PC-3 (cell line): ENCODE measurements at regions of chr10 and their contacts with region 1.

Region 1: DNA sequence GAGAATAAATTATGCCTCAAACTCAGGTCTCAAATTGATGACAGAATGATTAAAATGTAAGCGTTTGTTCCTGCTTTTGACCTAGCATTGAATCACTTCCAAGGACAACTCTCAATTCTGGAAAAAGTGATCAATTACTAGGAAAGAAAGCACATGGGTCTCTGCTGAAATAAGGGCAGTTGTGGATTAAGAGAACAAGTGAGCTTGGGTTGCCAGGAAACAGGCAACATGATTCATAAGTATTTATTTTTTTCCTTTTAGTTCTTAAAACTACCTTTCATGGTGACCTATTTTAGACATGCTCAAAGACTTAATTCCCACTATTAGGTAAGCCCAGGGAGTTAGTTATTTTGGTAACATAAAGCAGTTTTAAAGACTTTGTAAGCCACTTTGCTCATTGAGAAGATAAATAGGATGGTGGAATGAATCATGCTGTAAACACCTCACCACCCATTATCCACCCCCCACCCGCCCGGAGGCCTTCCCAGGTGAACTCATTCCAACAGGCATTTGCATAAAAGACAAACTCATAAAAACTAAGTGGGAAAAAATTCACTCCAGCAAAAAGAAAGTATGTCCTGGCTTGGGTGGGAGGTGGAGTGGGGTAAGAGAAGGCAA is 728.3 kb downstream of the SORCS1 start:
- DNase-seq: peak; percentile 92
- ATAC-seq: peak; percentile 66
- H3K4me3 ChIP-seq: no peak overlapping the region
- H3K27ac ChIP-seq: peak overlapping the region; percentile 100
- H3K4me1 ChIP-seq: peaks cover 55% of the 10 kb centered on the region
- H3K27me3 ChIP-seq: no peaks in the 10 kb centered on the region
- CTCF ChIP-seq: no peak

Region 2: DNA sequence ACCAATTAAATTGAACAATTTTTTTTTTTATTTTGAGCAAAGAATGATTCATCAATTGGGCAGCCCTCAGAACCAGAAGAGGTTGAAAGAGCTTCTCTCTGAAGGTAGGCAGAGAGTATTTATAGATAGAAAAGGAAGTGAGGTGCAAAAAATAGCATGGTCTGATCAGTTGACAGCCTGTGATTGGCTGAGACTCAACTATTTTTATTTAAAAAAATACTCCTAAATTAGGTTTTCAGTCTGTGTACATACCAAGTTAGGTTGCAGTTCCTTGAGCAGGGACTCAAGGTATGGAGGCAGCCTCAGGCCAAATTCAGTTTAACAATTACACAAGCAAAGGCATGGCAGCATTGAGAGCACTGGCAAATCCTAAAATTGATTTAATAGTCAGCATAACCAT is 346.4 kb before region 1 on chr10:
- CTCF ChIA-PET with region 1: no interaction called
- POLR2A ChIA-PET with region 1: no interaction called
- intact Hi-C with region 1: no loop called
- DNase-seq: no peak
- ATAC-seq: no peak
- H3K4me3 ChIP-seq: no peak overlapping the region
- H3K27ac ChIP-seq: no peak overlapping the region
- H3K4me1 ChIP-seq: no peaks in the 10 kb centered on the region
- H3K27me3 ChIP-seq: no peaks in the 10 kb centered on the region
- CTCF ChIP-seq: no peak

Region 3: GRCh38 chr10:106424981-106425380 is 11.3 kb before region 1 on chr10:
- CTCF ChIA-PET with region 1: no interaction called
- POLR2A ChIA-PET with region 1: no interaction called
- intact Hi-C with region 1: loop called (anchors 1 kb)
- DNase-seq: peak; percentile 86
- ATAC-seq: peak; percentile 40
- H3K4me3 ChIP-seq: no peak overlapping the region
- H3K27ac ChIP-seq: peak overlapping the region; percentile 100
- H3K4me1 ChIP-seq: peaks cover 25% of the 10 kb centered on the region
- H3K27me3 ChIP-seq: no peaks in the 10 kb centered on the region
- CTCF ChIP-seq: no peak

Region 4: DNA sequence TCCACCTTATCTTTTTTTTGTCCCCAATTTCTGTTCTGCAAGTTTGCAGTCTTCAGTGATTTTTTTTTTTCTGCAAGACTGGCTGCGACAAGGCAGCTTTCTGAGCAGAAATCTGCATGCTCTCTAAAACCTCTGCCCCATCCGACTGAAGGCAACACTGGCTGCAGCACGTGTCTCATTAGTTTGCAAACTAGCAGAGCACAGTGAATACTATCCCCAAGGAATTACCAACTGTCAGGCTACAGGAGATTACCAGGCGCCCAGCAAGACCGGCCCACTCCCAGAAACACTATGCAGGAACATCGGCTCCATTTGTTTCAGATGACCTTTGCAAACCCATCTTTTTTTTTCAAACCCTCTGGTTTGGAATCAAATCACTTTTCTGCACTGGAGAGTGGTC is 189.5 kb after region 1 on chr10:
- CTCF ChIA-PET with region 1: no interaction called
- POLR2A ChIA-PET with region 1: no interaction called
- intact Hi-C with region 1: no loop called
- DNase-seq: no peak
- ATAC-seq: no peak
- H3K4me3 ChIP-seq: no peak overlapping the region
- H3K27ac ChIP-seq: no peak overlapping the region
- H3K4me1 ChIP-seq: peaks cover 4% of the 10 kb centered on the region; the same call in 1 of the 2 replicates
- H3K27me3 ChIP-seq: no peaks in the 10 kb centered on the region
- CTCF ChIP-seq: no peak

Region 5: DNA sequence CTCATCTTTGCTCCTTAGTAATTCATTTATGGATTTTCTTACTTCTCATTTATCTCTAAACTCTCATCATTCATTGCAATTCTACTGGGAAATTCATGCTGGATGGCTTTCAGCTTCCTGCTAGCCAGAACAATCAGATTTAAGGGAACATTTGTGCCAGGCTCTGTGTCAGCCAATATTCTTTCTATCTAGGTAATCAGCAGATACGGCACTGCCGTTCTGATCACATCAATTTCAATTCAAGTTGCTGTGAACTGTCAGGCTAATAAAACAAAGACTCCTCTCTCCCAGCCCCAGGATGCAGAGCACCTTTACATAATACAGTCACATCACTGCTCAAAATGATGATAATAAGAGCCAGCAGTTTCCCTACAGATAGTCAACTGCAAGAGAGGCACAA is 260.0 kb after region 1 on chr10:
- CTCF ChIA-PET with region 1: no interaction called
- POLR2A ChIA-PET with region 1: no interaction called
- intact Hi-C with region 1: no loop called
- DNase-seq: no peak
- ATAC-seq: no peak
- H3K4me3 ChIP-seq: no peak overlapping the region
- H3K27ac ChIP-seq: no peak overlapping the region
- H3K4me1 ChIP-seq: no peaks in the 10 kb centered on the region
- H3K27me3 ChIP-seq: peaks cover 65% of the 10 kb centered on the region
- CTCF ChIP-seq: no peak